Heart left ventricle (tissue), 16 donors: ENCODE measurements at regions of chr19 and their contacts with region 1.

Region 1: DNA sequence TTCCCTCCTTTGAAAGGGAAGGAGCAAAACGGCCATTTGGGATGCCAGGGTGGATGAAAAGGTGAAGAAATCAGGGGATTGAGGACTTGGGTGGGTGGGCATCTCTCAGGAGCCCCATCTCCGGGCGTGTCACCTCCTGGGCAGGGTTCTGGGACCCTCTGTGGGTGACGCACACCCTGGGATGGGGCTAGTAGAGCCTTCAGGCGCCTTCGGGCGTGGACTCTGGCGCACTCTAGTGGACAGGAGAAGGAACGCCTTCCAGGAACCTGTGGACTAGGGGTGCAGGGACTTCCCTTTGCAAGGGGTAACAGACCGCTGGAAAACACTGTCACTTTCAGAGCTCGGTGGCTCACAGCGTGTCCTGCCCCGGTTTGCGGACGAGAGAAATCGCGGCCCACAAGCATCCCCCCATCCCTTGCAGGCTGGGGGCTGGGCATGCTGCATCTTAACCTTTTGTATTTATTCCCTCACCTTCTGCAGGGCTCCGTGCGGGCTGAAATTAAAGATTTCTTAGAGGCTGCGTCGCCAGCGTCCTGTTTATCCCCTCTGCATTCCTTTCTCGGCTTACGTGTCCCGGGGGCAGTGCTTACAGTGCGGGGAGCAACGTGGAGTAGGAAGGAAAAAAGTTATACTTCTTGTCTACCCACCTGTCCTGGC is 15.2 kb upstream of the S1PR4 start:
- DNase-seq: peak; percentile 51 to 86 (median 67)
- ATAC-seq: peak; percentile 65 to 91 (median 88)
- H3K4me3 ChIP-seq: no peak overlapping the region
- H3K27ac ChIP-seq: no peak overlapping the region
- H3K4me1 ChIP-seq: peaks cover 0 to 38% (median 0%) of the 10 kb centered on the region in 12 donors
- H3K27me3 ChIP-seq: no peaks in the 10 kb centered on the region
- CTCF ChIP-seq: peak; percentile 87 to 98 (median 94)
- POLR2A ChIP-seq: no peak

Region 2: DNA sequence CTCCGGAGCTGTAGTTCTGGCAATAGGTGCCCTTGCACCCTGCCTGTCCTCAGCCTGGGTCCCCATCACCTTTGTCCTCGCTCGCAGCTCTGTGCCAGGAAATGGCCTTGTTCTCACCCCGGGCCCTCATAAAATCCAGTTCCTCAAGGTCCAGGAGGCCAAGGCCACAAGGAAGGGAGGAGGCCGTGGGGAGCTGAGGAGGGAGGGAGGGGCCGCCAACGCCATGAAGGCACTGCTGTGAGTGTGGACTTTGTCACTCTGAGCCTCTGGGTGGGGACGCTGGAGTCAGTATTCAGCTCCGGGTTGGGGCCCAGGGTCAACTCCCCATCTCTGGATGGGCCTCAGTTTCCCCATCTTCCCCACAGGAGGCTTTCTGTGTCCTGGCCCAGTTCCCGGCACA is 78.4 kb before region 1 on chr19:
- intact Hi-C with region 1: no loop called
- DNase-seq: no peak
- ATAC-seq: peak in 2 of 4 donors; percentile 9 to 34
- H3K4me3 ChIP-seq: no peak overlapping the region
- H3K27ac ChIP-seq: no peak overlapping the region
- H3K4me1 ChIP-seq: peaks cover 0 to 6% (median 0%) of the 10 kb centered on the region in 12 donors
- H3K27me3 ChIP-seq: no peaks in the 10 kb centered on the region
- CTCF ChIP-seq: no peak
- POLR2A ChIP-seq: no peak

Region 3: GRCh38 chr19:3125900-3126524 is 37.3 kb before region 1 on chr19:
- intact Hi-C with region 1: loop called in 9 of 10 experiments (anchors 1 to 5 kb)
- DNase-seq: peak in 4 of 5 donors; percentile 59 to 84 (median 68)
- ATAC-seq: peak in 3 of 4 donors; percentile 67 to 74 (median 70)
- H3K4me3 ChIP-seq: no peak overlapping the region
- H3K27ac ChIP-seq: no peak overlapping the region
- H3K4me1 ChIP-seq: peaks cover 0 to 8% (median 0%) of the 10 kb centered on the region in 12 donors
- H3K27me3 ChIP-seq: no peaks in the 10 kb centered on the region
- CTCF ChIP-seq: peak; percentile 54 to 85 (median 73)
- POLR2A ChIP-seq: no peak